Activated naive CD8-positive, alpha-beta T cell treated with anti-CD3 and anti-CD28 coated beads, Interleukin-2, amount 10 ng/mL, durations not matched to agents 7 days and 5 days (primary cell): ENCODE measurements at regions of chr17 and their contacts with region 1.

Region 1: GRCh38 chr17:28743225-28744103 is at the start of gene TRAF4:
- DNase-seq: peak; percentile 88
- ATAC-seq: peak; percentile 86
- H3K4me3 Mint-ChIP-seq: peak within 1 kb of the TSS; percentile 91
- H3K27ac Mint-ChIP-seq: peak within 1 kb of the TSS; percentile 88
- H3K4me1 Mint-ChIP-seq: peaks cover 26% of the 10 kb centered on the region
- H3K27me3 Mint-ChIP-seq: no peaks in the 10 kb centered on the region
- total RNA-seq, gene TRAF4: 48.1 to 55.3 TPM

Region 2: GRCh38 chr17:28720247-28720996 is 23.0 kb before region 1 on chr17:
- POLR2A ChIA-PET with region 1: interaction called, 266 read pairs
- DNase-seq: no peak
- ATAC-seq: no peak
- H3K4me3 Mint-ChIP-seq: peak overlapping the region; percentile 95
- H3K27ac Mint-ChIP-seq: peak overlapping the region; percentile 97
- H3K4me1 Mint-ChIP-seq: peaks cover 43% of the 10 kb centered on the region
- H3K27me3 Mint-ChIP-seq: peaks cover 19% of the 10 kb centered on the region

Region 3: DNA sequence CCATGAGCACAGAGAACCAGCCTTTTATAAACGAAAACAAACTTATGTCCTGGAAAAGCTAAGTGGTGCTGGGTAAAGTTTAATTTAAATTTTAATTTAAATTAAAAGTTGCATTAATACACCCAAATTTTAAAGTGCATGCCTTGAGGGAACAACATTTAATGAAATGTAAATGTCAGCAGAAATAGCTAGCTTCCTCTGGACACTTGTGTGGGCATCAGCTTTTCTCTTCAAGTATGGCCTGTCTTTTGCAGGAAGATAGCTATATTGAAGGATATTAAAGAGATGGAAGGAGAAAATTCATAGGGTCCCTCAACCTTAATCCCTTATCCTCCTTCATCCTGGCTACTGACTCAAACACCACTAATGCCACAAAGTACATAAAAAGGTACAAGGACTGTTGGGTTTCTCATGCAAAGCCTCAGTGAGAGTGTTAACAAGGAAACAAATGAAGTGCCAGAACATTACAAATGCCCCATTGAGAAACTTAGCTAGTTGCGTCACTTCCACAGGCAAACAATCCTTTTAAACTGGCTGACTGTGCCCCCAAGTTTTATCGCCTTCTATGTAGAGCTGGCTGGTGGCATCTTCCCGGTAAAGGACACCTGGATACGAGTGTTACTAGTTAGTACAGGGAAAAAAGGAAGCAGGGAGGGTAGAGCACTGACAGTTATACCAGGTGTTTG is 193.7 kb after region 1 on chr17:
- POLR2A ChIA-PET with region 1: no interaction called
- DNase-seq: no peak
- ATAC-seq: no peak
- H3K4me3 Mint-ChIP-seq: no peak overlapping the region
- H3K27ac Mint-ChIP-seq: no peak overlapping the region
- H3K4me1 Mint-ChIP-seq: peaks cover 42% of the 10 kb centered on the region
- H3K27me3 Mint-ChIP-seq: no peaks in the 10 kb centered on the region